ENCODE measurements at regions of chr11 and their contacts with region 1.

Region 1: DNA sequence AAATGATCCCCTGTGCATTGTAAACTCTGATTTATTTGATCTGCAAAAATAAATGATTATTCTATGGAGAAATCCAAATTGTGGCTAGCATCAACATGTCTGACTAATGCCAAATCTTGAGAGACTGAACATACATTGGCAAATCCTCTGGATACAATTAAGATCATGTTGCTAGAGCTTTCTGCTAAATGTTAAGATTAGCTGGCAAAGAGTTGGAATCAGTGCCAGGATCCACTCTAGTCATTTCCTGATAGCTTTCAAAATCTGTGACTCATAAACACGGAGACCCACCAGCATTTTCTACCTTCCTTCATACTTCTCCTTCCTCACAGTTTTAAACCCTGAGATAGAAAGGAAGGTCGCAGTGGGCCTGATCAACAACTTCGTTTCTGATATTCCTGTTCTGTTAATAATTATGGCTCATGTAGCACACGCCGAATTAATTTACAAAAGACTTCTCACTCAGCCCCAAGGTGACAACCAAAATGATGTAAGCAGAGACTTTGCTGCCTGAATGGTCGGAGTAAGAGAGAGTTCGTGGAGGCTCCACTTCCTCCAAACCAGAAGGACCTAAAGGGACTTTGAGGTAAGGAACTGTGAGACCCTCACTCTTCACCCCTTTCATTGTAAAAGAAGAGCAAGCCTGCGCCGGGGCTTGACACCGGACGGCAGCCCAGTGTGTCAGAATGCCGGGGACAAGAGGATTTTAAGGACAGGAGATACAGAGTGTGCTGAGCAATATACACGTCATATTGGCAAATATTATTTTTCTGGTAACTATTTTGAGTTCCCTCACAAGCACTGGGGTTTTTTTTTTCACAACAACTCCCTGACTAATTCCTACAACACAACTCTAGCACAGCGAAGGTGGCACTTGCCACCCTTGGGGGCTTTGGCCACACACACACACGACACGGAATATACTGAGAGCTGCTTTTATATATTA is 42.0 kb downstream of the SERPINH1 start:
- DNase-seq: peak; percentile 67
- H3K4me3 ChIP-seq: no peak overlapping the region
- H3K27ac ChIP-seq: no peak overlapping the region
- H3K4me1 ChIP-seq: peaks cover 18% of the 10 kb centered on the region
- H3K27me3 ChIP-seq: no peaks in the 10 kb centered on the region
- CTCF ChIP-seq: no peak

Region 2: DNA sequence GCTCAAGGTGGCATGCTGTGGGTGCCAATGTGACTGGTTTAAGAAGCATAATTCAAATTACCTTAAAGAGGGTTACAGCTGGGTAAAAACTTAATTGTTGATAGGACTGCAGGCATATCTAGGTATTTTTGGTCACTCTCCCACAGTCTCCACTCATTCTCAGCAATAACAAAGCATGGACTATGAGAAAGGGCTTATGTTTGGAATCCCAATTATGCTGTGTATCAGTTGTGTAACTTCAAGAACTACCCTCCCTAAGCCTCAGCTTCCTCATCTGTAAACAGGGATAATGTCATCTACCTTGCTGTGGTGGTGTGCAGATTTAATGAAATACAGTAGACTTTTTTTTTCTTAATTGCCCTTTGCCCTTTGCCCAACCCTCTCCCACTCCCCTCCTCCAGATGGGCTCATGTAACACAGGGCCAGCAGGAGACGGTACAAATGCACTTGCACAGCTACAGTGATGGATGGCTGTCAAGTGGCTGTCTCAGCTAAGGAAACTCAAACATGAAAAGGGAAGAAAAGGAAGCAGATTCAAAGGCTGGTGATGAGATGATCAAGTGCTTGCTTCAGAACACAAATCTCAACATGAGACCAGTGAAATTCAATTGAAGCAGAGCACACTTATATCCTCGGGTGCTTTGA is 27.1 kb after region 1 on chr11:
- CTCF ChIA-PET with region 1: no interaction called
- dilution Hi-C with region 1: no loop called
- in situ Hi-C with region 1: no loop called
- intact Hi-C with region 1: loop called (anchors 2 kb)
- DNase-seq: no peak
- H3K4me3 ChIP-seq: no peak overlapping the region
- H3K27ac ChIP-seq: no peak overlapping the region
- H3K4me1 ChIP-seq: peaks cover 8% of the 10 kb centered on the region
- H3K27me3 ChIP-seq: no peaks in the 10 kb centered on the region
- CTCF ChIP-seq: no peak

Region 3: DNA sequence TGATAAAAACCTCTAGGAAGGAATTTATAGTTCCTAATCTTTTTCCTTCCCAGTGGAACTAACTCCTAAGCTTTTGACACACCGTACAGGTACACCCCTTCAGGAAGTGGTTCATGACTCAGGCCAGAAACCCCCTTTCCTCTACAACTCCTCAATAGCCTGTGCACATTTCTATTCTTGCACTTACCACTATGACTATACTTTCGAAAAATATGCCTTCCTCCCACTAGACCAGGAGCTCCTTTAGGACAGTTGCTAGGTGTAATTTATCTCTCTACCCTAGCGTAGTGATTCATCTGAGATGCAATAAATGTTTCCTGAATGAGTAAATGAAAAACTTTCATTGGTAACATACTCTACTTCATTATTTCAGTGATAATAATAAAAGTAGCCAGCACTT is 50.2 kb after region 1 on chr11:
- CTCF ChIA-PET with region 1: no interaction called
- dilution Hi-C with region 1: no loop called
- in situ Hi-C with region 1: no loop called
- intact Hi-C with region 1: no loop called
- DNase-seq: peak; percentile 93
- H3K4me3 ChIP-seq: no peak overlapping the region
- H3K27ac ChIP-seq: peak overlapping the region; percentile 46
- H3K4me1 ChIP-seq: peaks cover 41% of the 10 kb centered on the region
- H3K27me3 ChIP-seq: no peaks in the 10 kb centered on the region
- CTCF ChIP-seq: no peak

Region 4: DNA sequence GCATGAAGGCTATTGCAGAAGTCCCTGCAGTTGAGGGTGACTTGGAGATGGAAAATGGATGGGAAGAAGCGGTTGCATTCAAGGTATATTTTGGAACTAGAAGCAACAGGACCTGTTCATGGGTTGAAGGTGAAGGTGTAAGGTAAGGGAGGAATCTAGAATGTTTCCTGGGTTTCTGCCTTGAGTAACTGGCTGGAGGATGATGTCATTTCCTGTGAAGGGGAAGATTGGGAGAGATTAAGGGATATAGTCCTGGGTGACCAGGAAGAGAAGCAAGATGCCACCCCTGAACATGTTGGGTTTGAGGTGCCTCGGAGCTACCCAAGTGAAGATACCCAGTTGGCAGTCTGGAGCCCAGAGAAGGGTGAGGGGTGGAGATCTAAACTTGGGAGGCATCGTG is 101.5 kb after region 1 on chr11:
- CTCF ChIA-PET with region 1: no interaction called
- dilution Hi-C with region 1: no loop called
- in situ Hi-C with region 1: no loop called
- intact Hi-C with region 1: no loop called
- DNase-seq: peak; percentile 18
- H3K4me3 ChIP-seq: no peak overlapping the region
- H3K27ac ChIP-seq: no peak overlapping the region
- H3K4me1 ChIP-seq: no peaks in the 10 kb centered on the region
- H3K27me3 ChIP-seq: no peaks in the 10 kb centered on the region
- CTCF ChIP-seq: no peak

Region 5: DNA sequence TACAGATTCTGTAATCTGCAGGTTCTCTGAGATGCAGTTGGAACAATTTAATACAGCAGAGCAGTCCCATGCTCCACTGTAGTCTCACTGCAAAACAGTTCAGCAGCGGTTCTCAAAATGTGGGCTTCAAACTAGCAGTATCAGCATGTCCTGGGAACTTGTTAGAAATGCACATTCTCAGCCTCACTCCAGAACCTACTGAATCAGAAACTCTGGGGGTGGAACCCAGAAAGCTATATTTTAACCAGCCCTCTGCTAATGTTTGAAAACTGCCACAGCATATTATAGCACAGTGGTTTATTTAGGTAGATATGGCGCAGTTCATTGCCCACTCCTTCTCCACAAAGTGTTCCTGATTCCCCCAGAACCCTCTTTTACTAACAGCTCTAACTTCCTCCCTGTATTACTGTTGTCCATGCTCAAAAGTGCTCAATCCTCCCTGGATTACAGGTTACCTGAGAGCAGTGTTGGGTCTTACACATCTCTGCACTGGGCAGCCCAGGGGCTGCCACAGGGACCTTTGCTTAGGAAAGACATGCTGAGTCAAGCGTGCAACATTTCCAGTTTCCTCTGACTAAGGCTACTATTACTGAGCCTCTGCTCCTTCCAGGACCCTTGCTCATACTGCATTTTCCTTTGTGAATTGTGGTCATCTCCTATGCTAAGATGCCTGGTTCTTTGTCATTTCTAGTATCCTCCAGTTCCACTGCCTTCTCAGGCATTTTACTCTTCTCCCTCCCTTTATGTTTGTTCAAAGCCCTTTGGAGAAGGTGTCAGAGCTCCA is 156.8 kb after region 1 on chr11:
- CTCF ChIA-PET with region 1: no interaction called
- dilution Hi-C with region 1: no loop called
- in situ Hi-C with region 1: no loop called
- intact Hi-C with region 1: no loop called
- DNase-seq: peak; percentile 67
- H3K4me3 ChIP-seq: no peak overlapping the region
- H3K27ac ChIP-seq: no peak overlapping the region
- H3K4me1 ChIP-seq: peaks cover 16% of the 10 kb centered on the region
- H3K27me3 ChIP-seq: no peaks in the 10 kb centered on the region
- CTCF ChIP-seq: no peak